MCF 10A (cell line): ENCODE measurements at regions of chr2 and their contacts with region 1.

Region 1: DNA sequence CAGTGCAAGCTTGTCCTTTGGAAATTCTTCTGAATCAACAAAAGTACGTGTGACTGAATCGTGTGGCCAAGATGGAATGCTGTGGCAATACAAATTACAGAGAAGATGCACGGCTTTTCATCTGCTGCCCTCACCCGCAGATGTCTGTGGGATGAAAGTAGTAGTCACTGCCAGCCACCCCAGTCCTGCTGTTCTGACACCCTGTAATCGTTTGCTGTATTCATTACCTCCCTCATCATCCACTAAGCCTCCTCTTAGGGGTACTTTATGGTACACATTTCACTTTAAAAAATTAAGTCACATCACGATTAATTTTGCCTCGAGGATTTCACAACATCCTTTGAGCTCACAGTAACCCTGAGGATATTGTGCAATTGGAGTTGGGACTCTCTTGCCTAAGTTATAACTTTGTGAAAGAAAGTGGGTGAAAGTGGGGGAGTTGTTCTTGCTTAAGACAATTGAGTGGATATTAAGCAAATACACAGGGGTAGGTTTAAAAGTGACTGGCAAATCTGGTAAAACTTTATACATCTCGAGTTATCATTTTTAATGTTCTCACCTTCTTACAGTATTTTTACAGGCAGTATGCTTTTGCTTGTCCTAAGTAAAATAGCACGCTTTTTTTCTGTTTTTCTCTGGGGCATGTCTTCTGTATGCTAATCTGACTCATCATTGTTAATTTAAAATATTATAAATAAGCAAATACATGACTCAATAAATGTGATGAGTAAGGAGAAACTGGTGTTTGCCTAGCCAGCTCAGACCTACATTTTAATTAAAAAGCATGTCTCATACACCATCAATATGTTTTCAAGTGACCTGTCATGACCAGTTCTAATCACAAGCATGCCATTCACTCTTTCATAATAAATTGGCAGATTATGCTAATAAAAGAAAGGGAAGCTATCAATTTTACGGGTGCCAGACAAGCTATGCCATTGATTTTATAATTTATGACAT is 680.9 kb downstream of the IRS1 start:
- DNase-seq: peak; percentile 94
- H3K4me3 Mint-ChIP-seq: peak overlapping the region; percentile 63
- H3K27ac Mint-ChIP-seq: peak overlapping the region; percentile 65
- H3K4me1 Mint-ChIP-seq: peaks cover 59% of the 10 kb centered on the region
- H3K27me3 Mint-ChIP-seq: no peaks in the 10 kb centered on the region
- CTCF ChIP-seq: no peak

Region 2: DNA sequence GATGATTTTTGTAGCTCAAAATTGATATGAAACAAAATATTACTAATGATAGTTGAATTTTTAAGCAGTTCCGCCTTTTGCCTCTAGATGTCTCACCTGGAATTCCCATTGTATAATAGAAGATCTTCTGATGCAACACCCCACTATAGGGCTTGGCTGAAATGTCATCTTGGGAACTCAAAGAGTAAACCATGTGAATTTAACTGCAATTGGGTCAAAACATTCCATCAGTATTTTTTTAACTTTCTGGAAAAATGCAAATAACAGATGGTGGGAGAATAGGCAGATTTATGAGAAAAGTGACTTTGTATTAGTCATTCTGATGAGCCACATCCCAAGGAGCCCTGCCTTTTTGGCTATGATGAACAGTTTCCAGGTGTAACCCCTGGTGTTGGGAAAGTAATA is 229.3 kb before region 1 on chr2:
- CTCF ChIA-PET with region 1: interaction called, 13 read pairs
- POLR2A ChIA-PET with region 1: interaction called, 12 read pairs
- intact Hi-C with region 1: loop called (anchors 1 kb)
- DNase-seq: peak; percentile 70
- H3K4me3 Mint-ChIP-seq: no peak overlapping the region
- H3K27ac Mint-ChIP-seq: no peak overlapping the region
- H3K4me1 Mint-ChIP-seq: peaks cover 2% of the 10 kb centered on the region
- H3K27me3 Mint-ChIP-seq: no peaks in the 10 kb centered on the region
- CTCF ChIP-seq: peak; percentile 77

Region 3: DNA sequence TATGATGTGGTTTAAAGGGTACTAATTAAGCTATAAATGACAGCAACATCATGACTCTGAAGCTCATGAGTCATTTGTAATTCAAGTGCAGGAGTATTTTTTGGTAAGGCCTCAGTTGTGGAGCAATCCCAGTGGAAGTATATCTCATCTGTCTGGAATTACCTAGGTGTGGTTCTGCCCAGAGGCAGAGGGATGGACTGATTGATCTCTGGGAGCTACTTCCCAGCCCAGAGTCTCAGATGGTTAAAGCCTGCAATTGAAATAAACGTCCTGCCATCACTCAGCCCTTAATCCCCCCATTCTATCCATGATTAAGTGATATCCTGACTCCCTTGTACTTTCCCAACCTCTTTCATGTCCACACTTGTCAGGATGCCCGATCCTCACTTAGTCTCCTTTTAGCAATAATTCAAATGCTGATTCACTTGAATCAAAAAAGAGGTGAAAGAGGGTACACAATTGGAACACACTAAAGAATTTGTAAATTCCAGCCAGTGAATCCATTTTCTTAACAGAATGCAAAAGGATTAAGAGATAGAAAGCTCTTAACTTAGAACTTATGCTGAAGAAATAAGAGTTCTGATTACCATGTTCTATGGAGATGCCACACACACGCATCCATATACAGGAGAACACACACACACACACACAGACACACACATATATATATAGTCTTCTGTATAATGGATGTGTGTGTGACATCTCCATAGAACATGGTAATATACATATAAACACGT is 54.9 kb before region 1 on chr2:
- CTCF ChIA-PET with region 1: no interaction called
- POLR2A ChIA-PET with region 1: interaction called, 35 read pairs
- intact Hi-C with region 1: no loop called
- DNase-seq: peak; percentile 78
- H3K4me3 Mint-ChIP-seq: no peak overlapping the region
- H3K27ac Mint-ChIP-seq: peak overlapping the region; percentile 63
- H3K4me1 Mint-ChIP-seq: peaks cover 27% of the 10 kb centered on the region
- H3K27me3 Mint-ChIP-seq: no peaks in the 10 kb centered on the region
- CTCF ChIP-seq: no peak

Region 4: DNA sequence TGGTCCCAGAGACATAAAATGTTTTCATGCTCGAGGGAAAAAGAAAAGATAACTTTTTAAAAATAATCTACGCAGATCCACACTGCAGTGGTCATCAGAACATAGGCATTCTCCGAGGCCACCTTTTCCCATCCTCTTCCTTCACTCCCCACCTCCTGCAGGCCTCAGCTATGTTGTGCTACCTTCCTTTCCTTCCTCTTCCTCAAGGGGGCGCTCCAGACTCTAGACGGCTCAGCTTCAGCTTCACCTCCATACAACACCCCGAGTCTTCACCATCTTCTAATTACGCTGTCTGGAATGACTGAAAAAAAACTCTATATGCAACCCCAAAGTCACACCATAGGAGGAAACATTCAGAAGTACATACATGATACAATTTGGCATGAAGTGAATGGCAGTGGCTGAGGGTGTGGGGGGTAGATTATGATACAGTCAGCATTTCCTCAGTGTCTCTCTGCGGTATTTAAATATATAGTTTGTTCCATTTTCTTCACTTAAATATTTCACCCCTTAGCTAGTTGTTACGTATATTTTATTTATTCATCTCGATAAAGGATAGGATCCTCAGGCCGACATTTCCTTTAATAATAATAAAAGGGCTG is 97.3 kb after region 1 on chr2:
- CTCF ChIA-PET with region 1: interaction called, 3 read pairs
- POLR2A ChIA-PET with region 1: interaction called, 5 read pairs
- intact Hi-C with region 1: loop called (anchors 10 kb)
- DNase-seq: peak; percentile 75
- H3K4me3 Mint-ChIP-seq: no peak overlapping the region
- H3K27ac Mint-ChIP-seq: no peak overlapping the region
- H3K4me1 Mint-ChIP-seq: peaks cover 35% of the 10 kb centered on the region
- H3K27me3 Mint-ChIP-seq: no peaks in the 10 kb centered on the region
- CTCF ChIP-seq: no peak

Region 5: DNA sequence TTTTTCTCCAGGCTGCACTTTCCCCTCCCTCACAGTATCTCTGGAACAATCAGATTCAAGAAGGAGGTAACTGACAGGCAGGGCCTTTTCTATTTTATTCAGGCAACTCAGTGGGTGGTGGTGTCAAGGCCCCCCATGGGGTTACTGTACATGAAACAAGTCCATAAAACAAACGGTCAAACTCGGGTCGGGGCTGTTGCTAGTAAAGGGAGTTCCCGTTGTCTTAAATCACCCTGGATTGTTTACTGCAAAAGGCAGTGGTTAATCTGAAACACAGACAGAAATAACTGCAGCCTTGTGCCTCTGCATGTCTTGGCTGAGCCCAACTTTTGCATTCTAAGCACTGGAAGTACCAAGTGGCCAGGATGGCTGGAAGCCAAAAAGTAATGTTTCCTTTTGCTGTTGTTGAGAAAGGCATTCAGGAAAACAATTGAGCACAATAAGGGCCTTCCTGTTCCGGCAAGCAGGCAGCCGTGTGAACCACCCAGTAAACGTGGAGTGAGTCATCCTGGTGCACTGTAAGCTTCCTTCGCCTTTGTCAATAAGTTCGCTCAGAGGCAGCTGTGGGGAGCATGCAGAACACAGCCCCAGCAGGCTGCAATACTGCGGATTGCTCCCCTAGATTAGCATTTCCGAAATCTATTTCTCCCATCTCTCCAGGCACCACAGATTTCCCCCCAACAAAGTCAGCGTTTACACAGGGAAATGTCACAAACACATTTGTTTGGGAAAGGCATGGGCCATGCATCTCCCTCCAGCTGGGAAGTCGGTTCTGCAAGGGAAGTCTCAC is 531.3 kb after region 1 on chr2:
- CTCF ChIA-PET with region 1: no interaction called
- POLR2A ChIA-PET with region 1: interaction called, 11 read pairs
- intact Hi-C with region 1: loop called (anchors 5 kb)
- DNase-seq: peak; percentile 99
- H3K4me3 Mint-ChIP-seq: no peak overlapping the region
- H3K27ac Mint-ChIP-seq: peak overlapping the region; percentile 95
- H3K4me1 Mint-ChIP-seq: peaks cover 35% of the 10 kb centered on the region
- H3K27me3 Mint-ChIP-seq: no peaks in the 10 kb centered on the region
- CTCF ChIP-seq: no peak